ENCODE measurements at regions of chr7 and their contacts with region 1.

Region 1: DNA sequence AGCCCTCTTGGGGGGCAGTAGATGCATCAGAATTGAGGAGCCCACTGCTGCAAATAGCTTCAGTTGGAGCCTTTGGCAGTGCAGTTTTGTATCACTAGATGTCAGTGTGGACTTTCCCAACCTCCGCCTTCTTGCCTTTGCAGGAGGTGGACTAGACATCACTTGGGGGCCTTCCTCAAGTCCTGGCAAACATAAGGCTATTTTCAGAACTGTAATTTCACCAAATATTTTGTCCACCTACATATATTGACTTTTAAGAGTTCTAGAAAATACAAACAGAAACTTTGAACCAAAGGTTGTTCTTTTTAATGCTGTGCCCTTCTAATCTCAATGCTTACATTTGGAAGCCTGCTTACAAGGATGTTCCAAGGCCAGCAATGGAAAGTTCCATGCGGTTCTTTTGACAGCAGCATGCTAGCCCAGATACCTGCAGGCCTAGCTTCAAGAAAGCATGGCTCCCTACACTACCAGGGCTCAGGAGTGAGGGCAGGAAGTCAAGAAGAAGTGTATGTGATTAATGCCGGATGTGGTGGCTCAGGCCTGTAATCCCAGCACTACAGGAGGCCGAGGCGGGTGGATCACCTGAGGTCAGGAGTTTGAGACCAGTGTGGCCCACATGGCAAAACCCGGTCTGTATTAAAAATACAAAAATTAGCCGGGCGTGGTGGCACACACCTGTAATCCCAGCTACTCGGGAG is 8.0 kb upstream of the ZNRF2 start:
- DNase-seq: peak in 1 of 2 experiments; percentile 37
- H3K4me3 ChIP-seq: no peak overlapping the region
- H3K27ac ChIP-seq: no peak overlapping the region
- H3K4me1 ChIP-seq: no peaks in the 10 kb centered on the region
- H3K27me3 ChIP-seq: no peaks in the 10 kb centered on the region
- CTCF ChIP-seq: peak; percentile 73

Region 2: GRCh38 chr7:29878081-29878688 is 398.2 kb before region 1 on chr7:
- CTCF ChIA-PET with region 1: no interaction called
- POLR2A ChIA-PET with region 1: no interaction called
- intact Hi-C with region 1: loop called (anchors 10 kb)
- DNase-seq: peak; percentile 50 to 59
- H3K4me3 ChIP-seq: no peak overlapping the region
- H3K27ac ChIP-seq: no peak overlapping the region
- H3K4me1 ChIP-seq: no peaks in the 10 kb centered on the region
- H3K27me3 ChIP-seq: no peaks in the 10 kb centered on the region
- CTCF ChIP-seq: peak; percentile 90

Region 3: GRCh38 chr7:30225863-30226613 is 50.3 kb before region 1 on chr7:
- CTCF ChIA-PET with region 1: no interaction called
- POLR2A ChIA-PET with region 1: no interaction called
- intact Hi-C with region 1: loop called (anchors 2 kb)
- DNase-seq: peak; percentile 84 to 99
- H3K4me3 ChIP-seq: peak overlapping the region; percentile 43
- H3K27ac ChIP-seq: peak overlapping the region; percentile 97
- H3K4me1 ChIP-seq: peaks cover 33% of the 10 kb centered on the region
- H3K27me3 ChIP-seq: no peaks in the 10 kb centered on the region
- CTCF ChIP-seq: no peak

Region 4: DNA sequence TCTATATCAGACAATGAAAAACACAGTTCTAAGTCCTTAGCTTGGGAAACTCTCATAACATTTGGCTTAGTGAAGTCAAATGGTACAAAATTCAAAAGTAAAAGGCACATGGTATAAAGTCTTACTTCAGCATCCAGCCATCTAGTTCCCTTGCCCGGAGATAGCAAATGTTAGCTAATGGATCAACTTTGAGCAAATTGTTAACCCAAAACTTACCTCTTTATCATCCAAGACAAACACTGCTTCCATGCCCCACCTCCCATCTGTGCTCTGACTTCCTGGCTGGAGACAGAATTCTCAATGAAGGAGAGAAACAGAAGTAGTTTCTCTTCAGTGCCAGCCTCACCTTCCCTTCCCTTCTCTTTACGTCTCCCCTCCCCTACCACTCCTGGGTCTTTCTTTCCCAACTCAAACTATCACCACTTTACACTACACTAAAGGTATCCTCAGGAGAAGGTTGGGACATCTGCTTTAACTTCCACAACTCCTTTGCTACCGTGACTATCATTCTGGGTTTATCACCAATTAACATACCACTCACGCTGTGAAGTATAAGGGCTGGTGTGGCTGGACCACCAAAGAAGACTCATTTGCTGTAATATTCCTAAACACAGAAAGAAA is 13.2 kb before region 1 on chr7:
- CTCF ChIA-PET with region 1: interaction called, 12 read pairs
- POLR2A ChIA-PET with region 1: no interaction called
- intact Hi-C with region 1: no loop called
- DNase-seq: no peak
- H3K4me3 ChIP-seq: no peak overlapping the region
- H3K27ac ChIP-seq: no peak overlapping the region
- H3K4me1 ChIP-seq: no peaks in the 10 kb centered on the region
- H3K27me3 ChIP-seq: no peaks in the 10 kb centered on the region
- CTCF ChIP-seq: no peak

Region 5: GRCh38 chr7:30412810-30413504 is 136.6 kb after region 1 on chr7:
- CTCF ChIA-PET with region 1: interaction called, 4 read pairs
- POLR2A ChIA-PET with region 1: no interaction called
- intact Hi-C with region 1: loop called (anchors 1 kb)
- DNase-seq: peak; percentile 40 to 80
- H3K4me3 ChIP-seq: no peak overlapping the region
- H3K27ac ChIP-seq: no peak overlapping the region
- H3K4me1 ChIP-seq: no peaks in the 10 kb centered on the region
- H3K27me3 ChIP-seq: no peaks in the 10 kb centered on the region
- CTCF ChIP-seq: peak; percentile 84

Region 6: DNA sequence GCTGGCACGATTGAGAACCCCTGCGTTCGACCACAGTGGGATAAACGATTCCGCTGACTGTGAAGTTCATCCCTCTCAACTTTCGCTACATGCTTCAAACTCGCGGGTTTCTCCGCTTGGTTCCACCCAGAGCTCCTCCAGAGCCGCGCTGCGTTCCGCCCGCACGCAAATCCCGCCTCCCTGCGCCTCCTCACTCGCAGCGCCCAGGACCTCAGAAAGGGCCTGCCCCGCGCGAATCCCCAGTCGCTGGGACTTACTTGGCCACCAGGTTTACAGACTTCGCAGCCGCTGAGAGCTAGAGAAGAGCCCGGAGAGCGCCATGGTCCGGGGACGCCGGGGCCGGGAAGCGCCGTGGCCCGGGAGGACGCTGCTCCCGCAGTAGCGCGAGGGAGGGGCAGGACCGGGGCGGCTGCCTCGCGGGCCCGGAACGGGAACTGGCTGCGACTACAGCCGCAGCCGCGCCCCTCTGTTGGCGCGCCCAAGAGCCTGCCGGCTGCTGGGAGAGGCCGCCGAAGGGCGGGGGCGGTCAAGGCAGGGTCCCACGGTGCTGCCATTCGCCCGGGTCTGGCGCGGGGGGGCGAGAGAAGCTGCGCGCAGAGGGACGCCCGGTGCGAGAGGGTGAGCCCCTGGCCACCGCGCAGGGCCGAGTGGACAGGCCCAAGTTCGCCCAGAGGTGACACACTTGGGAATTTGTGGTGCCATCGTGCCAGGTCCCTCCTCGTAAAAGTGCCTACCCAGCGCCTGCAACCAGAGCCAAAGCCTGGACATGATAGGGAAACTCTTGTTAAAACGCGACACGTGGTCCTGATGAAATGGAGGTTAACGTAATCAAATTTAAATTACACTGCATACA is 202.2 kb after region 1 on chr7 and contains the start of gene NOD1:
- CTCF ChIA-PET with region 1: no interaction called
- POLR2A ChIA-PET with region 1: interaction called, 13 read pairs
- intact Hi-C with region 1: no loop called
- DNase-seq: peak; percentile 73 to 85
- H3K4me3 ChIP-seq: peak within 1 kb of the TSS; percentile 73
- H3K27ac ChIP-seq: peak within 1 kb of the TSS; percentile 76
- H3K4me1 ChIP-seq: peaks cover 21% of the 10 kb centered on the region
- H3K27me3 ChIP-seq: no peaks in the 10 kb centered on the region
- CTCF ChIP-seq: no peak; the same call in 1 of the 2 replicates
- total RNA-seq, gene NOD1: 16.5 and 20.5 TPM in 2 replicates

Measured in PC-9 (cell line).